PC-9 (cell line): ENCODE measurements at regions of chr16 and their contacts with region 1.

Region 1: DNA sequence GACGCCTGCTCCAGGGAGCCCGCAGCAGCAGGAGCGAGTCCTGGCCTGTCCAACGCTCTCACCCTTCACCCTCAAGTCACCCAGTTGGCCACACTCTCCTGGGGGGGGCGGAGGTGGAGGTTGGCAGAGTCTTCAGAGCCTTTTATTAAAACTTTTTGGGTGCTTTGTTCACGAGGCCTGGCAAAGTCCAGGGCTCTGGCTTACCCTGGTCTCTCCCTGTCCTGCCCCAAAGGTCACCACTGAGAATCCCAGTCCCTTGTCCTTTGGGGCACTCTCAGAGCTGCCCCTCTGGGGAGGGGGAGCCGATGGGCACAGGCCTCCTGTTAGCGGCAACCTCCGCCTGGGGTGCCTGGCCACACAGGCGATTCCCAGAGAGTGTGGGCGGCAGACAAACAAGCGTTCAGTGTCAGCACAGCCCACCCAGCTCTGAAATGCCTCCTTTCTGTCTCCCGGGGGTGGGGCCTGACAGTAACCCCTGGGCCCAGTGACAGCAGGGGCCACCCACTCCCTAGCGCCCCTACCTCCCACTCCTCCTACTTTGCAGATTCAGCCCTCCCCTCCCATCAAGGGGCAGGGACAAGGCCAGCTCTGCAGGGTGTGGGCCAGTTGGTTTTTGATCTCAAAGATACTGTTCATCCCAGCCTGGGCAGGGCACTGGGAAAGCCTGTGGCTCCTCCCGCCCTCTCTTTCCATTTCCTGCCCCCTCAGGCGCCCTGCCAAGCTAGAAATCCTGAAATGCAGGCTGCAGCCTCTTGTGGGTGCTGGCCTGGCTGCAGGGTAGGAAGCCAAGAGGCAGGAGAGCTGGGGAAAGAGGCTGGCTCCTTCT is 36.5 kb upstream of the EMP2 start:
- DNase-seq: peak; percentile 63 to 94
- H3K4me3 ChIP-seq: no peak overlapping the region
- H3K27ac ChIP-seq: no peak overlapping the region
- H3K4me1 ChIP-seq: peaks cover 26% of the 10 kb centered on the region
- H3K27me3 ChIP-seq: no peaks in the 10 kb centered on the region
- CTCF ChIP-seq: no peak; the same call in 1 of the 2 replicates

Region 2: DNA sequence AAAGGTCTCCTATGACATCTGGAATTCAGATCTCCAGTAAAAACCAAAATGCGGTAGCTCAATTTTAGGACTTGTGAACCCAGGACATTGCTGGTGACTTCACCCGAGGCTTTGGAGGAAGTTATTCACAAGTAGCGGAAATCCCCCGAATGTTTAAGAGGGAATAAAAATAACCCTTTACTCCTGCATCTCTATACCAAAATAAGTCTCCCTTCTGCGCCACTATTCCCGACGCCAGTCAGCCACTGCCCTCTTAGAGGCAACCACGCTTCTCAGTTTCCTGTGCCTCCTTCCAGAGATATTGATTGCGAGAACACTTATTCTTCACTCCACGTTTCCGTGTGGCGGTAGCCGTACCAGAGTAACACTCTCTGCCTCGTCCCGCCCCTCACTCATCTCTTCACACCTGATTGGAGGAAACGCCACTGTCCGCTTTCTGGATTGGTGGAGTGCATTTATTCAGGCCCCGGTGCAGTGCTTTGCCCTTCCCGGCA is 63.9 kb before region 1 on chr16:
- CTCF ChIA-PET with region 1: no interaction called
- POLR2A ChIA-PET with region 1: no interaction called
- intact Hi-C with region 1: no loop called
- DNase-seq: peak in 1 of 2 experiments; percentile 59
- H3K4me3 ChIP-seq: no peak overlapping the region
- H3K27ac ChIP-seq: no peak overlapping the region
- H3K4me1 ChIP-seq: peaks cover 15% of the 10 kb centered on the region
- H3K27me3 ChIP-seq: no peaks in the 10 kb centered on the region
- CTCF ChIP-seq: no peak

Region 3: DNA sequence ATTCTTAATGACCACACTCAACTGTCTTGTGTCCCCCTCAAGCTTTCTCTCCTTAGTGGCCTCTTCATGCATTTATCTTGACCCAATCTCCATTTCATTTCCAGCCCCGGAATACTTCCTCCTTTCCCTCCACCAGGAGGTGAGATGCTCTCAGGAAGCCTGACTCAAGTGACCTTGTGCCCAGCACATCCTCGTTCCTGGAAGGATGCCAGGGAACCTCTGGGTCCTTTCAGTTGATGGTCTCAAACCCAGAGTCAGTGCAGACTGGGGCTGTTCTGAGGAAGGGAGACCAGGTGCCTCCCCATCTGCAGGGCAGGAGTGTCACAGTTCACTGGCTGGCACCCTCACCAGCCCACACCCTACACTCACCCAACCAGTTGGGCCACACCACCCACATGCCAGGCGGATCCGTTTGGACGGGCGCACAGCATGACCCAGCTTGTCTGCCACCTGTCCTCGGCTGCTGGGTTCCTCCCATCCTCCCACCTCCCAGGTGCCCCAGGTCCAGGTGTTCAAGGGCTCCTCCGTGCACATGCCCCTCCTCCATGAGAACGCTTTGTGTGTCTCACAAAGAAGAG is 22.5 kb before region 1 on chr16:
- CTCF ChIA-PET with region 1: no interaction called
- POLR2A ChIA-PET with region 1: no interaction called
- intact Hi-C with region 1: loop called (anchors 1 kb)
- DNase-seq: peak; percentile 90 to 93
- H3K4me3 ChIP-seq: no peak overlapping the region; the same call in 1 of the 2 replicates
- H3K27ac ChIP-seq: peak overlapping the region; percentile 36
- H3K4me1 ChIP-seq: peaks cover 41% of the 10 kb centered on the region
- H3K27me3 ChIP-seq: no peaks in the 10 kb centered on the region
- CTCF ChIP-seq: no peak; the same call in 1 of the 2 replicates

Region 4: DNA sequence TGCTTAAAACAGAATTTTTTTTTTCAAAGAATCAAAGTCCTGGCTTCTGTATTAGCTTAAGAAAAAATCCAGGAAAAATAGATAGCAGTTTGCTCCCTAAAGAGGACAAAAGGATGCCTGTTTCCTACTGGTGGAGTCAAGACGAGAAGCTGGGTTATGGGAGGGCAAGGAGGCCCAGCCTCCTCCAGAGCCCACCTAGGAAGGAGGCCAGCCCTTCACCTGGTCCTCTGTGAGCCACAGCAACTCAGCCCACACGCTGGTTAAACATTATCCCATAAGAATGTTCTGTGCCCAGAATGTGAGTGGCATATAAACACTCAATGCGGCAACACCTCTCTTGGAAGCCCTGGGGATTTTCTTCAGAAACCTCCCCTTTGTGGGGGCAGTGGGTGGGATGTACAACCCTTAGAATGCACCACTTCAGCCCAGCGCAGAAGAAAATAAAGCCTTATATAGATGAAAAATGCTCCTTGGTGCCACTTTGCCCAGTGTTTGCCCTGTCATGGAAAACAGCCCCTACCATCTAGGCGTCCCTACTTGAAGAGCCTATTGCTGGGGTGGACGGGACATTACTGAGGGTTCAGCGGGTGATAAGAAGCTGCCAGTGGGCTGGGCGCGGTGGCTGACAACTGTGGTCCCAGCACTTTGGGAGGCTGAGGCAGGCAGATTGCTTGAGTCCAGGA is 29.8 kb after region 1 on chr16:
- CTCF ChIA-PET with region 1: no interaction called
- POLR2A ChIA-PET with region 1: interaction called, 12 read pairs
- intact Hi-C with region 1: no loop called
- DNase-seq: no peak
- H3K4me3 ChIP-seq: no peak overlapping the region
- H3K27ac ChIP-seq: no peak overlapping the region
- H3K4me1 ChIP-seq: no peaks in the 10 kb centered on the region
- H3K27me3 ChIP-seq: no peaks in the 10 kb centered on the region
- CTCF ChIP-seq: no peak

Region 5: GRCh38 chr16:10876799-10877341 is 259.9 kb after region 1 on chr16 and contains the start of gene CIITA:
- CTCF ChIA-PET with region 1: interaction called, 4 read pairs
- POLR2A ChIA-PET with region 1: no interaction called
- intact Hi-C with region 1: loop called (anchors 1 kb)
- DNase-seq: peak; percentile 68 to 72
- H3K4me3 ChIP-seq: no peak within 1 kb of the TSS
- H3K27ac ChIP-seq: no peak within 1 kb of the TSS
- H3K4me1 ChIP-seq: peaks cover 3% of the 10 kb centered on the region
- H3K27me3 ChIP-seq: peaks cover 26% of the 10 kb centered on the region
- CTCF ChIP-seq: no peak
- total RNA-seq, gene CIITA: 1.2 and 1.7 TPM in 2 replicates